ENCODE measurements at regions of chr5 and their contacts with region 1.

Region 1: DNA sequence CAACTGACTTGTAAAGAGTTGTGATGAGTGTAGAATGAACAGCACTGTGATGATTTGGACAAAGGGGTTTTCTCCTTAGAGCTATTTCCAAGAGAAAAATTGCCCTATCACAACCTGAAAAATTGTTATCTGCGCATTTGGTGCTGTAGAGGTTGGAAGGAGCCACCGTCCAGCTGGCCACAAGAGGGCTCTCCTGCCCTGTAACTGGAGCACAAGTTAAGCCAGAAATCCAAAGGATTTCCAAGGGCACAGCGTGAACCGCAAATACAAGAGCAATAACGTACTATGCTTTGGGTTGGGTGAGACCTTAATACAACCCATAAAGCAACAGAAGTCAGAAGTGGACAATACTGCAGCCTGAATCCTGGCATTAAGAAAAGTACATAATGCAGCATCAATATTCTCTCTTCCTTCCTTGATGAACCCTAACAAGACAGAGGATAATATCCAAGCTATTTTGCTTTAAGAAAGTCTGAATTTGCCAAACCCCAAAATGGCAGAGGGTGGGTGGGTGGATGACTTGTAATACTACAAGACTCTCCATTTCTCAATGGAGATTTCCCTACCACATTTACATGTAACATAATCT is 56.8 kb upstream of the SMIM32 start:
- DNase-seq: peak; percentile 64
- H3K4me3 ChIP-seq: no peak overlapping the region
- H3K27ac ChIP-seq: no peak overlapping the region
- H3K4me1 ChIP-seq: no peaks in the 10 kb centered on the region
- H3K27me3 ChIP-seq: peaks cover 5 to 13% of the 10 kb centered on the region in 2 experiments
- CTCF ChIP-seq: peak; percentile 84 to 87
- POLR2A ChIP-seq: no peak

Region 2: GRCh38 chr5:136364307-136364706 is 114.5 kb after region 1 on chr5:
- CTCF ChIA-PET with region 1: interaction called, 10 read pairs
- POLR2A ChIA-PET with region 1: no interaction called
- dilution Hi-C with region 1: no loop called
- intact Hi-C with region 1: no loop called
- DNase-seq: no peak
- H3K4me3 ChIP-seq: no peak overlapping the region
- H3K27ac ChIP-seq: no peak overlapping the region
- H3K4me1 ChIP-seq: no peaks in the 10 kb centered on the region
- H3K27me3 ChIP-seq: peaks cover 2 to 20% of the 10 kb centered on the region in 2 experiments
- CTCF ChIP-seq: peak in 1 of 2 donors; percentile 15
- POLR2A ChIP-seq: no peak

Region 3: GRCh38 chr5:136374003-136374402 is 124.2 kb after region 1 on chr5:
- CTCF ChIA-PET with region 1: interaction called, 7 read pairs
- POLR2A ChIA-PET with region 1: no interaction called
- dilution Hi-C with region 1: no loop called
- intact Hi-C with region 1: loop called (anchors 5 kb)
- DNase-seq: peak; percentile 72
- H3K4me3 ChIP-seq: no peak overlapping the region
- H3K27ac ChIP-seq: no peak overlapping the region
- H3K4me1 ChIP-seq: peaks cover 3% of the 10 kb centered on the region
- H3K27me3 ChIP-seq: peaks cover 0 to 12% of the 10 kb centered on the region in 2 experiments
- CTCF ChIP-seq: peak; percentile 51 to 58
- POLR2A ChIP-seq: no peak

Region 4: GRCh38 chr5:136424835-136425584 is 175.2 kb after region 1 on chr5:
- CTCF ChIA-PET with region 1: interaction called, 6 read pairs
- POLR2A ChIA-PET with region 1: no interaction called
- dilution Hi-C with region 1: no loop called
- intact Hi-C with region 1: loop called (anchors 1 kb)
- DNase-seq: peak; percentile 58
- H3K4me3 ChIP-seq: no peak overlapping the region
- H3K27ac ChIP-seq: no peak overlapping the region
- H3K4me1 ChIP-seq: no peaks in the 10 kb centered on the region
- H3K27me3 ChIP-seq: peaks cover 5 to 8% of the 10 kb centered on the region in 2 experiments
- CTCF ChIP-seq: peak; percentile 86 to 88
- POLR2A ChIP-seq: no peak

Region 5: GRCh38 chr5:136717917-136718316 is 468.1 kb after region 1 on chr5:
- CTCF ChIA-PET with region 1: no interaction called
- POLR2A ChIA-PET with region 1: no interaction called
- dilution Hi-C with region 1: no loop called
- intact Hi-C with region 1: no loop called
- DNase-seq: no peak
- H3K4me3 ChIP-seq: no peak overlapping the region
- H3K27ac ChIP-seq: no peak overlapping the region
- H3K4me1 ChIP-seq: no peaks in the 10 kb centered on the region
- H3K27me3 ChIP-seq: peaks cover 0 to 3% of the 10 kb centered on the region in 2 experiments
- CTCF ChIP-seq: no peak
- POLR2A ChIP-seq: no peak